Right ventricle myocardium inferior (tissue), 1 donor: ENCODE measurements at regions of chr6 and their contacts with region 1.

Region 1: GRCh38 chr6:51531623-51532022 is 555.8 kb downstream of the PKHD1 start:
- DNase-seq: no peak
- ATAC-seq: peak; percentile 52

Region 2: DNA sequence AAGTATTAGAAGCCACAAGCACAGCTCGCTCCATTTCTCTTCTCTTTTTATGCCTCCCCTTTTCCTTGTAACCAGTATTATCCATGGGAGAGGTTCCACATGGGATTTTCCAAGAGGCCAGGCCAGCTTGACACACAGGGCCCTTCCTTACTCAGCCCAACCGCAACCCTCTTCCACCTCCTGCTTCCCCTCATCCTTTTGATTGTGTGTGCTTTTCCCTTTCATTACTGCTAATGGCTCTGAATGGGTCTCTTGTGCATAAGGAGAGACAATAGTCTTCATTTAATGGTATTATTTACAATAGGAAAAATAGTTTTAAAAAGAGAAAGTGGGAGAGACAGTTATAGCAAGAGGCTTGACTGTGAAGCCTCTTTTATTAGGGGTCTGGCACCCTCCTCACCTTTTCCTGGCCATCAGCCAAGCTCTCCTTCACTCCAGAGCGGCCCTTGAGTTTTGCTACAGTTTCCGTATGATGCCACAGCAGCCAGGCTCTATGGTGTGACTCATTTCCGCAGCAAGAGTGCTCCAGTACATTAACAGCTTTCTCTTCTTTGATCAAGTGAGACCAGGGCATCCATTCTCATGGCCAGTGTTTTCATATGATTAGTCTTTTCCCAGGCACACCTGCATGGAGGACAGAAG is 133.4 kb before region 1 on chr6:
- intact Hi-C with region 1: no loop called
- DNase-seq: no peak
- ATAC-seq: no peak

Region 3: GRCh38 chr6:51618563-51618962 is 86.9 kb after region 1 on chr6:
- intact Hi-C with region 1: no loop called
- DNase-seq: no peak
- ATAC-seq: no peak

Region 4: GRCh38 chr6:51753635-51754034 is 222.0 kb after region 1 on chr6:
- intact Hi-C with region 1: loop called (anchors 5 kb)
- DNase-seq: no peak
- ATAC-seq: no peak

Region 5: GRCh38 chr6:51959744-51960383 is 428.2 kb after region 1 on chr6:
- intact Hi-C with region 1: loop called (anchors 10 kb)
- DNase-seq: no peak
- ATAC-seq: no peak